Breast epithelium (tissue), 4 donors: ENCODE measurements at regions of chr14 and their contacts with region 1.

Region 1: GRCh38 chr14:61470261-61470960 is 149.0 kb downstream of the PRKCH start:
- DNase-seq: no peak
- H3K4me3 ChIP-seq: peak overlapping the region in 1 of 3 donors; percentile 15
- H3K27ac ChIP-seq: peak overlapping the region in 1 of 2 donors; percentile 50
- H3K4me1 ChIP-seq: peaks cover 0 to 6% of the 10 kb centered on the region in 2 donors
- H3K27me3 ChIP-seq: no peaks in the 10 kb centered on the region
- CTCF ChIP-seq: no peak
- POLR2A ChIP-seq: no peak

Region 2: GRCh38 chr14:61368114-61368726 is 102.2 kb before region 1 on chr14:
- intact Hi-C with region 1: no loop called
- DNase-seq: no peak
- H3K4me3 ChIP-seq: no peak overlapping the region
- H3K27ac ChIP-seq: peak overlapping the region; percentile 38 to 41
- H3K4me1 ChIP-seq: peaks cover 0 to 7% of the 10 kb centered on the region in 2 donors
- H3K27me3 ChIP-seq: no peaks in the 10 kb centered on the region
- CTCF ChIP-seq: no peak
- POLR2A ChIP-seq: no peak

Region 3: GRCh38 chr14:61510736-61511557 is 40.5 kb after region 1 on chr14:
- intact Hi-C with region 1: loop called (anchors 1 kb)
- DNase-seq: no peak
- H3K4me3 ChIP-seq: no peak overlapping the region
- H3K27ac ChIP-seq: peak overlapping the region; percentile 64 to 67
- H3K4me1 ChIP-seq: peaks cover 6 to 10% of the 10 kb centered on the region in 2 donors
- H3K27me3 ChIP-seq: no peaks in the 10 kb centered on the region
- CTCF ChIP-seq: no peak
- POLR2A ChIP-seq: no peak

Region 4: GRCh38 chr14:61525293-61526011 is 55.0 kb after region 1 on chr14:
- intact Hi-C with region 1: no loop called
- DNase-seq: peak; percentile 86 to 89
- H3K4me3 ChIP-seq: no peak overlapping the region
- H3K27ac ChIP-seq: peak overlapping the region; percentile 87 to 92
- H3K4me1 ChIP-seq: peaks cover 3 to 24% of the 10 kb centered on the region in 2 donors
- H3K27me3 ChIP-seq: no peaks in the 10 kb centered on the region
- CTCF ChIP-seq: no peak
- POLR2A ChIP-seq: no peak

Region 5: GRCh38 chr14:61564623-61565091 is 94.2 kb after region 1 on chr14:
- intact Hi-C with region 1: loop called (anchors 1 kb)
- DNase-seq: no peak
- H3K4me3 ChIP-seq: no peak overlapping the region
- H3K27ac ChIP-seq: no peak overlapping the region
- H3K4me1 ChIP-seq: peaks cover 4% of the 10 kb centered on the region in 2 donors
- H3K27me3 ChIP-seq: no peaks in the 10 kb centered on the region
- CTCF ChIP-seq: no peak
- POLR2A ChIP-seq: no peak